Activated CD4-positive, alpha-beta memory T cell treated with anti-CD3 and anti-CD28 coated beads for 36 hours (primary cell): ENCODE measurements at regions of chr12 and their contacts with region 1.

Region 1: GRCh38 chr12:9741726-9742125 is 8.8 kb upstream of the CLECL1 start:
- DNase-seq: peak; percentile 90
- H3K4me3 Mint-ChIP-seq: peak overlapping the region; percentile 74
- H3K27ac Mint-ChIP-seq: peak overlapping the region; percentile 79
- H3K4me1 Mint-ChIP-seq: peaks cover 69% of the 10 kb centered on the region
- H3K27me3 Mint-ChIP-seq: no peaks in the 10 kb centered on the region

Region 2: GRCh38 chr12:9667403-9668160 is 74.1 kb before region 1 on chr12:
- CTCF ChIA-PET with region 1: interaction called, 6 read pairs
- POLR2A ChIA-PET with region 1: interaction called, 5 read pairs
- intact Hi-C with region 1: loop called (anchors 1 kb)
- DNase-seq: no peak
- H3K4me3 Mint-ChIP-seq: peak overlapping the region; percentile 93
- H3K27ac Mint-ChIP-seq: peak overlapping the region; percentile 98
- H3K4me1 Mint-ChIP-seq: peaks cover 56% of the 10 kb centered on the region
- H3K27me3 Mint-ChIP-seq: no peaks in the 10 kb centered on the region

Region 3: DNA sequence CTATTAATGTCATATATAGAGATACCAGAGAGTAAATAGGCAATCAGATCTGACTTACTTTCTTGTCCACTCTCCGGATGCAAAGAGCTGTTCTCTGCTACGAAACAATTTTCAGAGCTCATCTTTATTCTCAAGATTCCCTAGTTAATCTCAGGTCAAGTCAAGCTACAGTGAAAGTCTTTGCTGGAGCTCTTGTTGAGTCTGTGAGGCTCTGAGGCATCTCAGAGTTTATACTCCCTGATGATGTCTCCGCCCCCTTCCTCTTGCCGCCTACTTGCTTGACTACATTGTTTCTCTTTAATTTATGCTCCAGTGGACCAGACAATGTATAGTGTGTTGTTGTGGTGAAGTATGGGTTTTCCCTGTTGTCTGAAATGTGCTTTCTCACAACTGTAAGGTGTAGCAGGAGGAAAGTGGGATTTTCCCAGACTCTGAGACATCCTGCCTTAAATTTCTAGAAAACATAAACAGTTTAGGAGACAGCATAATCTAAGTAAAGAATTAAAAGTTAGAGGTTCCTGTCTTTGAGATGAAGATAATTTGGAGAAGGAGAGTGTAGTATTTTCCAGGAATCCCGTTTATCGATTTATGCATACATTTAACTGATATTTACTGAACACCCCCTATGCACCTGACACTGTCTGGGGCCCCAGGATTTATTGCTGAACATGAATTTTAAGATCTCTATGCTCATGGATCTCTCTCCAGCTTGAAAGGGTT is 19.1 kb after region 1 on chr12 and contains the start of gene CD69:
- CTCF ChIA-PET with region 1: interaction called, 31 read pairs
- POLR2A ChIA-PET with region 1: interaction called, 46 read pairs
- intact Hi-C with region 1: no loop called
- DNase-seq: peak; percentile 90
- H3K4me3 Mint-ChIP-seq: peak within 1 kb of the TSS; percentile 100
- H3K27ac Mint-ChIP-seq: peak within 1 kb of the TSS; percentile 99
- H3K4me1 Mint-ChIP-seq: peaks cover 52% of the 10 kb centered on the region
- H3K27me3 Mint-ChIP-seq: peaks cover 2% of the 10 kb centered on the region
- total RNA-seq, gene CD69: 118 to 120 TPM

Region 4: GRCh38 chr12:9813821-9814809 is 72.4 kb after region 1 on chr12:
- CTCF ChIA-PET with region 1: interaction called, 139 read pairs
- POLR2A ChIA-PET with region 1: interaction called, 3 read pairs
- intact Hi-C with region 1: no loop called
- DNase-seq: peak; percentile 91
- H3K4me3 Mint-ChIP-seq: peak overlapping the region; percentile 72
- H3K27ac Mint-ChIP-seq: no peak overlapping the region
- H3K4me1 Mint-ChIP-seq: peaks cover 12% of the 10 kb centered on the region
- H3K27me3 Mint-ChIP-seq: peaks cover 19% of the 10 kb centered on the region

Region 5: GRCh38 chr12:10147714-10148403 is 406.1 kb after region 1 on chr12:
- CTCF ChIA-PET with region 1: interaction called, 5 read pairs
- POLR2A ChIA-PET with region 1: no interaction called
- intact Hi-C with region 1: loop called (anchors 2 kb)
- DNase-seq: no peak
- H3K4me3 Mint-ChIP-seq: no peak overlapping the region
- H3K27ac Mint-ChIP-seq: no peak overlapping the region
- H3K4me1 Mint-ChIP-seq: peaks cover 10% of the 10 kb centered on the region
- H3K27me3 Mint-ChIP-seq: peaks cover 13% of the 10 kb centered on the region

Region 6: GRCh38 chr12:10540776-10541205 is 799.1 kb after region 1 on chr12:
- CTCF ChIA-PET with region 1: no interaction called
- POLR2A ChIA-PET with region 1: no interaction called
- intact Hi-C with region 1: loop called (anchors 10 kb)
- DNase-seq: no peak
- H3K4me3 Mint-ChIP-seq: no peak overlapping the region
- H3K27ac Mint-ChIP-seq: no peak overlapping the region
- H3K4me1 Mint-ChIP-seq: peaks cover 9% of the 10 kb centered on the region
- H3K27me3 Mint-ChIP-seq: peaks cover 39% of the 10 kb centered on the region